ENCODE measurements at regions of chr5 and their contacts with region 1.

Region 1: GRCh38 chr5:137075163-137075970 is 423.8 kb downstream of the SPOCK1 start:
- DNase-seq: peak; percentile 94
- ATAC-seq: peak; percentile 100
- H3K4me3 Mint-ChIP-seq: no peak overlapping the region
- H3K27ac Mint-ChIP-seq: peak overlapping the region; percentile 13; the same call in 1 of the 2 replicates
- H3K4me1 Mint-ChIP-seq: peaks cover 24% of the 10 kb centered on the region
- H3K27me3 Mint-ChIP-seq: no peaks in the 10 kb centered on the region
- CTCF ChIP-seq: peak; percentile 68

Region 2: DNA sequence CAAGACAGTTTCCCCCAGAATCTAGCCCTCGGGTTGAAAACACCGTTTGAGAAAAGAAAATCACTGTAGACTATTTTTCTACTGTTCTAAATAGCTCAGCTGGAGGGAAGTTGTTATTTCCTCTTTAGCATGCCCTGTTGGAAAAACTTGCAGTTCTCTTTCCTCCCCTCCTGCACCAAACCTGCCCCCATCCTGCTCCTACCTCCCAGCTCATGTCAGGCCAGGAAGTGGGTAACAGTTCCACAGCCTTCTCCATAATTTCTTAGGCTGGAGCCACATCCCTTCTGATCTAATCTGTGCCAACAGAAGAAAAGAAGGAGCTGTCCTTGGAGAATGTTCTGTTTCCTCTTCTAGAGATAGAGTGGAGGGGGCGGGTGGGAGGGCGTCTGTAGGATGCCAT is 14.0 kb before region 1 on chr5:
- CTCF ChIA-PET with region 1: interaction called, 15 read pairs
- POLR2A ChIA-PET with region 1: no interaction called
- DNase-seq: no peak
- ATAC-seq: no peak
- H3K4me3 Mint-ChIP-seq: no peak overlapping the region
- H3K27ac Mint-ChIP-seq: no peak overlapping the region
- H3K4me1 Mint-ChIP-seq: peaks cover 8% of the 10 kb centered on the region
- H3K27me3 Mint-ChIP-seq: no peaks in the 10 kb centered on the region
- CTCF ChIP-seq: no peak

Region 3: GRCh38 chr5:137086342-137086741 is 11.0 kb after region 1 on chr5:
- CTCF ChIA-PET with region 1: interaction called, 31 read pairs
- POLR2A ChIA-PET with region 1: interaction called, 3 read pairs
- DNase-seq: no peak
- ATAC-seq: peak; percentile 57
- H3K4me3 Mint-ChIP-seq: no peak overlapping the region
- H3K27ac Mint-ChIP-seq: no peak overlapping the region
- H3K4me1 Mint-ChIP-seq: peaks cover 48% of the 10 kb centered on the region
- H3K27me3 Mint-ChIP-seq: no peaks in the 10 kb centered on the region
- CTCF ChIP-seq: no peak

Region 4: GRCh38 chr5:137091472-137091871 is 16.1 kb after region 1 on chr5:
- CTCF ChIA-PET with region 1: interaction called, 31 read pairs
- POLR2A ChIA-PET with region 1: interaction called, 3 read pairs
- DNase-seq: peak; percentile 64
- ATAC-seq: peak; percentile 95
- H3K4me3 Mint-ChIP-seq: no peak overlapping the region
- H3K27ac Mint-ChIP-seq: peak overlapping the region; percentile 85
- H3K4me1 Mint-ChIP-seq: peaks cover 46% of the 10 kb centered on the region
- H3K27me3 Mint-ChIP-seq: no peaks in the 10 kb centered on the region
- CTCF ChIP-seq: no peak

Region 5: GRCh38 chr5:137218471-137218870 is 143.1 kb after region 1 on chr5:
- CTCF ChIA-PET with region 1: interaction called, 20 read pairs
- POLR2A ChIA-PET with region 1: no interaction called
- DNase-seq: no peak
- ATAC-seq: no peak
- H3K4me3 Mint-ChIP-seq: no peak overlapping the region
- H3K27ac Mint-ChIP-seq: no peak overlapping the region
- H3K4me1 Mint-ChIP-seq: no peaks in the 10 kb centered on the region
- H3K27me3 Mint-ChIP-seq: no peaks in the 10 kb centered on the region
- CTCF ChIP-seq: no peak